ENCODE measurements at regions of chr6 and their contacts with region 1.

Region 1: GRCh38 chr6:85344996-85345395 is 104.9 kb upstream of the NT5E start:
- H3K4me3 ChIP-seq: no peak overlapping the region
- H3K27ac ChIP-seq: no peak overlapping the region
- H3K4me1 ChIP-seq: no peaks in the 10 kb centered on the region
- CTCF ChIP-seq: no peak

Region 2: GRCh38 chr6:85323435-85324040 is 21.5 kb before region 1 on chr6:
- CTCF ChIA-PET with region 1: interaction called, 11 read pairs
- POLR2A ChIA-PET with region 1: no interaction called
- H3K4me3 ChIP-seq: no peak overlapping the region
- H3K27ac ChIP-seq: no peak overlapping the region
- H3K4me1 ChIP-seq: no peaks in the 10 kb centered on the region
- CTCF ChIP-seq: peak; percentile 70

Measured in HEK293 (cell line).